ENCODE measurements at regions of chr2 and their contacts with region 1.

Region 1: DNA sequence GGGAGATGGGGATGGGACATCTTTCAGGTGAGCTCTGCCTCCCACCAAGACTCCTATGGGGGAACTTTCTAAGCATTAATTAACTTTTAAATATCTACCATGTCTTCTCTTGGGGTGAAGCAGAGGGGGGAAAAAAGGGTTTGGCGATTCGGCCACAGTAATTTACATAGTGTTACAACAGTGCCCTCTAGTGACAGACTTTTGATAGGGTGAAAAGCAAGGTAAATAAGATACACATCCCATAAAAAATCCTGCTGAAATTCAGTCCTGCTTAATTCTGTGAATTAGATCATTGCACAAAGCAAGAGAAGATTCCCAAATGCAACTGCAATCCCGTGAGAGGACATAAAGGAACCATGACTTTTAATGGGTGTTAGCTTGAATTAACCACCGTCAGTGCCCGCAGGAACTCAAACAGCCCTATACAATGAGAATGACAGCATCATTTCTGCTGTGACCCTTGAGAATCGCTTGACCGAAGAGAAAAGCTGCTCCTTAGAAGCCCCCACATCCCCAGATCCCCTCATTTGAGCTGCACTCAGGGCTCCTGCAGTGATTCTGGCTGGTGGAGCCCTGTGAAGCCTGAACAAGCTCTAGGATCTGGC is 32.8 kb downstream of the FAM124B start:
- DNase-seq: no peak
- ATAC-seq: no peak

Region 2: GRCh38 chr2:224449212-224450147 is 80.3 kb after region 1 on chr2:
- intact Hi-C with region 1: loop called (anchors 10 kb)
- DNase-seq: no peak
- ATAC-seq: no peak

Measured in sciatic nerve (tissue), 2 donors.